ENCODE measurements at regions of chr10 and their contacts with region 1.

Region 1: DNA sequence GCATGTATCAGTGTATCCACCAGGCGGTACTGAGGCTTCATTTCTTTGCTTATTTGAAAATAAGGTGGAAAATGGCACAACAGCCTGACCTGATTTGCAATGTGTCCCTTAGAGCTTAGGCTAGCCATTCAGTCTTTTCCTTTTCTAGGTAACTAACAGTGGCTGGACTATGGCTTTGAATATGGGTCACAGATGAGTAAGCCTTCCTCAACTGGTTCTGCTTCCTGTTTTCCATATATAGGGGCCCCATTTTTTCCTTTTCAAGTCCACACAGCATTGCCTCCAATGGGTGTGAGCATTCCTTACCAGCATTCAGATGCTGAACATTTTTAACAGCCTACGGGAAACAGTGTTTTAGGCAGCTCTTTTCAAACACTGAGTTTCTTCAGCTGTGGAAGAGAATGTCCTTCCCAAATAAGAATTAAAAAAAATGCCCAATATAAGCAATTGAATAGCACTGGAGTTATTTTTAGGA is 3.9 kb upstream of the ITGB1 start:
- DNase-seq: no peak
- H3K4me3 ChIP-seq: no peak overlapping the region
- CTCF ChIP-seq: no peak
- POLR2A ChIP-seq: no peak

Region 2: GRCh38 chr10:34008641-34009040 is 1046.7 kb after region 1 on chr10:
- intact Hi-C with region 1: loop called (anchors 5 kb)
- DNase-seq: no peak
- H3K4me3 ChIP-seq: no peak overlapping the region
- CTCF ChIP-seq: no peak
- POLR2A ChIP-seq: no peak

Measured in lower leg skin (tissue), 4 donors.